ENCODE measurements at regions of chr6 and their contacts with region 1.

Region 1: GRCh38 chr6:27902335-27903314 is 9.6 kb downstream of the OR2B2 start:
- DNase-seq: peak; percentile 83 to 91
- ATAC-seq: peak; percentile 95
- H3K4me3 ChIP-seq: peak overlapping the region; percentile 42 to 79
- H3K27ac ChIP-seq: no peak overlapping the region
- H3K4me1 ChIP-seq: no peaks in the 10 kb centered on the region
- H3K27me3 ChIP-seq: no peaks in the 10 kb centered on the region

Region 2: GRCh38 chr6:27177485-27178406 is 724.9 kb before region 1 on chr6:
- intact Hi-C with region 1: loop called in 1 of 2 experiments (anchors 5 kb)
- DNase-seq: peak; percentile 88 to 92
- ATAC-seq: peak; percentile 92
- H3K4me3 ChIP-seq: peak overlapping the region; percentile 91 to 98
- H3K27ac ChIP-seq: peak overlapping the region in 1 of 2 donors; percentile 83
- H3K4me1 ChIP-seq: no peaks in the 10 kb centered on the region
- H3K27me3 ChIP-seq: no peaks in the 10 kb centered on the region

Region 3: GRCh38 chr6:27472617-27473400 is 429.8 kb before region 1 on chr6 and contains the start of gene ZNF184:
- intact Hi-C with region 1: loop called in 1 of 2 experiments (anchors 10 kb)
- DNase-seq: peak; percentile 97 to 98
- ATAC-seq: peak; percentile 99
- H3K4me3 ChIP-seq: peak within 1 kb of the TSS; percentile 49 to 66
- H3K27ac ChIP-seq: peak within 1 kb of the TSS in 1 of 2 donors; percentile 7
- H3K4me1 ChIP-seq: no peaks in the 10 kb centered on the region
- H3K27me3 ChIP-seq: no peaks in the 10 kb centered on the region
- total RNA-seq, gene ZNF184: 5.3 to 8.0 TPM

Region 4: DNA sequence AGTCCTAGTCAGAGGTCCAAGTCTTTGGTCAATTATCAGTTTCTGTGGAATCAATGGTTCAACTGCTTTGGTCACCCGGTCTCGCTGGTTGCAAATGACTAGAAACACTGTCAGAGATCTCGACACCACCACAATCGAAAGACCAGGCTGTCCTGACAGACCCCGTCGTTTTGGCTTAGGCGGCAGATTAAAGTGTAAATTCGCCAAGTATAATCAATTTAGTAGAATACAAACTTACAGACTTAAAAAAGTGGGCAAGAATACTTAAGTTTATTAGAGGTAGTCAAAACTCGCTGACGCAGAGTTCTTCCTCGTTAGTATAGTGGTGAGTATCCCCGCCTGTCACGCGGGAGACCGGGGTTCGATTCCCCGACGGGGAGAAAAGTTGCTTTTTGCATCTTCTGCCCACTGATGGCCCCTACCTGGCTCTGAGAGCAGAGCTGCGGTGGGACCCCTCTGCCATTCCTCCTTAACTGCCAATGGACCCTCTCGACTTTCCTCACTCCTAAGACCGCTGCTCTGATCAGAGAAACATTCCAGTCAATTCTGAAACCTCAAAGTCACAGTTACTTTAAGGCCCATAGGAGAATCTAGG is 399.1 kb before region 1 on chr6:
- intact Hi-C with region 1: loop called in 1 of 2 experiments (anchors 10 kb)
- DNase-seq: peak; percentile 67 to 90
- ATAC-seq: peak; percentile 91
- H3K4me3 ChIP-seq: peak overlapping the region; percentile 8 to 24
- H3K27ac ChIP-seq: no peak overlapping the region
- H3K4me1 ChIP-seq: no peaks in the 10 kb centered on the region
- H3K27me3 ChIP-seq: peaks cover 0 to 2% of the 10 kb centered on the region in 2 donors

Region 5: DNA sequence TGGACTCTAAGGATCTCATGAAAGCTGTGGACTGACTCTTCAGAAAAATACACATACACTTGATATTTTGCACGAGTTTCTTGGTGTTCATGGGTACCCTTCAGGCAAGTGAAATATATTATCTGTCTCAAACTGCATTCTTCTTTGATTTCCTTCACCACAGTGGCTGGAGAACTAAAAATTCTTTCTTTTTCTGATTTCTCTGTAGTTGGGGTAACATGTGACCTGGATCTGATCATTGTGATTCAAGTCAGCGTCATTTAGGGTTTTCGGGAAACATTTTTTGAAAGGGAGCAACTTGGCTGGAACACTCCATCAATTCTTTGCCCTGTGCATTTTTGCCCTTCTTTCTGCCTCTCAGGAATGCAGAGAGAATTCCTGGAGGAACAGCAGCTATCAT is 196.2 kb before region 1 on chr6:
- intact Hi-C with region 1: no loop called
- DNase-seq: no peak
- ATAC-seq: no peak
- H3K4me3 ChIP-seq: no peak overlapping the region
- H3K27ac ChIP-seq: no peak overlapping the region
- H3K4me1 ChIP-seq: no peaks in the 10 kb centered on the region
- H3K27me3 ChIP-seq: no peaks in the 10 kb centered on the region

Region 6: DNA sequence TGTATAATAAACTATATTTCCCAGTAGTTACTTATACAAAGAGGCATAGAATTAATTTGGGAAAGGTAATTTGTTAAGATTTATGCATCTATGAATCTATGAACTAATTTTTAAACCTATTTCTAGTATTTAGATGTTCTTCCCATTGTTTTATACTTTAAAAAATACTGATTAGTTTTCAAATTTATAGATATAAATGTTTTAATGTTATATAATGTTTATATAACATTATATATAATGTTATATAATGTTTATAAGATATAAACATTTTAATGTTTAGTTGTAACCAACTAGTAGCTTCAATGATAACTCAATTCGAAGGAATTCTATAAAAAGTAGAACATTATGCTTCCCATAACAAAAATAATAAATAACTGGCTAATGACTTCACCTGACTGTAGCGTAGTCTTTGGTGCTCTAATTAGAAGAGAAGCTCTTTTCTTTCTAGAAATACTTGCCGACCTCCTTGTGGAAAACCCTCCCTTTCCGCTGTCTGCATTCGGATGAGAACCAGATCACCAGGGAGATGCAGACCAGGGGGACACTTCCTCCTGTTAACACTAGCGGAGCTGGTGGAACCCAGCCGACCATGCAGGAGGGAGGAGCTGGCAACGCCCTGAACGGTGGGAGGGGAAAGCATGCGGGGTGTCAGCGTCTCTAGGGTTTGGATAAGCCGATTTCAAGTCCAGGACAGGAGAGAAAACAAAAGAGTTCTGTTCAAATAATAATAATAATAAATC is 148.8 kb before region 1 on chr6:
- intact Hi-C with region 1: loop called in 1 of 2 experiments (anchors 5 kb)
- DNase-seq: peak; percentile 69 to 83
- ATAC-seq: peak; percentile 27
- H3K4me3 ChIP-seq: peak overlapping the region in 1 of 2 donors; percentile 9
- H3K27ac ChIP-seq: no peak overlapping the region
- H3K4me1 ChIP-seq: no peaks in the 10 kb centered on the region
- H3K27me3 ChIP-seq: peaks cover 0 to 4% of the 10 kb centered on the region in 2 donors

Region 7: DNA sequence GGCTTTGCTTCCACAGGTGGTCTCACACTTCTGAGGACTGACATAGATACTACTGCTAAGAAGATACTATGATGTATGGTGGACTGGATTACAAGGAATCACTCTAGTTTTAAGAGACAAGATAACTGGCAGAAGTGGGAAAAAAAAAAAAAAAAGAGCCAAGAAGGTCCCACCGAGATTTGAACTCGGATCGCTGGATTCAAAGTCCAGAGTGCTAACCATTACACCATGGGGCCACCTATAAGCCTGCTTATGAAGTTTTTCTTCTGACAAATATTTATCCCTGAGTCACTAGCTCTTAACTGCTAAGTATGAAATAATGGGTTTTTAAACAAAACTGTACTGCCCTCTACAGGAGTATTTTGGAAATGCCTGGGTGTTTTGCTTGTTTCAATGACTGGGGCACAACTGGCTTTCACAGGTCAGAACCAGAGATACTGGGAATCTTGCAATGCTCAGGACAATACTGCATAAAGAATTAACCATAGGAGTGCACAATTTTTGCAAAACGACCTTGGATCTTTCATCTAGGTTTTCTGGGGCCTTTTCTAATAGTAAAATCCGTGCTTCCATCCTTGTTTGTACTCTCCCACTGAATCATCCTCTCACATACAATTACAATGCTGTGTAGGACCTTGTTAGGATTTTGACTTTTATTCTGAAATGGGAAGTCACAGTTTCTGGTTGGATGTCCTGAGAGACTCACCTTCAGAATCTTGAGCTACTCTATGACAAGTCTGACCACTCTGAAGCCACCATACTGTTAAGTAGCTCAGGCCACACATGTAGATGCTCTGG is 106.7 kb before region 1 on chr6:
- intact Hi-C with region 1: loop called in 1 of 2 experiments (anchors 5 kb)
- DNase-seq: no peak
- ATAC-seq: peak; percentile 86
- H3K4me3 ChIP-seq: no peak overlapping the region
- H3K27ac ChIP-seq: no peak overlapping the region
- H3K4me1 ChIP-seq: no peaks in the 10 kb centered on the region
- H3K27me3 ChIP-seq: no peaks in the 10 kb centered on the region